Heart right ventricle (tissue), 16 donors: ENCODE measurements at regions of chr9 and their contacts with region 1.

Region 1: DNA sequence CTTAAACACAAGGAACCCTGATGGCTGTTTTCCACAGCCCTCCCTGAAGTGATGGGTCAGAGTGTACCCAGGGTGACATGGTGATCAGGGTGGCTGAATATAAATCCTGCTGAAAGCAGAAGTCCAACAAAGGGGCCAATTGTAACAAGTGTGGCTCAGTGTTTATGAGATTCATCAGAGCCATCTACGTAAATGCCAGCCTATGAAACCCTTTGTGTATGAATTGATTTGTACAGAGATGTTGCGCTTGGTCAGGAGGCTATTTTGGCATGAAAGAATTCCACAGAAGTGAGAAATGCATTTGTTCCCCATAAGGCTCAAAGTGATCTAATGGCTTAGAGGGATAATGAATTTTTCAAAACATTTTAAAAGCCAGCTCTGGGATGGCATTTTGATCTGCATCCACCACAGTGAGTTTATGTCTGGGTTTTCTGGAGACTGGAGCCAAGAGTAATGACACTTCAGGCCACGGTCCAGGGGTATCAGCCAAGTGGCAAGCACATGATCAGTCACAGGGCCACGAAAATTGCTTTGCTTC is 12.4 kb downstream of the PRUNE2 start:
- DNase-seq: no peak
- ATAC-seq: peak in 1 of 8 donors; percentile 41
- H3K4me3 ChIP-seq: no peak overlapping the region
- H3K27ac ChIP-seq: no peak overlapping the region
- H3K4me1 ChIP-seq: no peaks in the 10 kb centered on the region
- H3K27me3 ChIP-seq: peaks cover 0 to 13% (median 8%) of the 10 kb centered on the region in 7 donors
- CTCF ChIP-seq: no peak

Region 2: GRCh38 chr9:76374702-76375559 is 518.5 kb before region 1 on chr9:
- intact Hi-C with region 1: no loop called
- DNase-seq: peak; percentile 66 to 78
- ATAC-seq: peak; percentile 88 to 96 (median 90)
- H3K4me3 ChIP-seq: no peak overlapping the region
- H3K27ac ChIP-seq: peak overlapping the region in 9 of 10 donors; percentile 20 to 71 (median 53)
- H3K4me1 ChIP-seq: peaks cover 3 to 51% (median 33%) of the 10 kb centered on the region in 9 donors
- H3K27me3 ChIP-seq: no peaks in the 10 kb centered on the region
- CTCF ChIP-seq: no peak

Region 3: GRCh38 chr9:76846297-76846696 is 47.2 kb before region 1 on chr9:
- intact Hi-C with region 1: loop called in 1 of 10 experiments (anchors 10 kb)
- DNase-seq: no peak
- ATAC-seq: no peak
- H3K4me3 ChIP-seq: no peak overlapping the region
- H3K27ac ChIP-seq: no peak overlapping the region
- H3K4me1 ChIP-seq: no peaks in the 10 kb centered on the region
- H3K27me3 ChIP-seq: no peaks in the 10 kb centered on the region
- CTCF ChIP-seq: no peak

Region 4: DNA sequence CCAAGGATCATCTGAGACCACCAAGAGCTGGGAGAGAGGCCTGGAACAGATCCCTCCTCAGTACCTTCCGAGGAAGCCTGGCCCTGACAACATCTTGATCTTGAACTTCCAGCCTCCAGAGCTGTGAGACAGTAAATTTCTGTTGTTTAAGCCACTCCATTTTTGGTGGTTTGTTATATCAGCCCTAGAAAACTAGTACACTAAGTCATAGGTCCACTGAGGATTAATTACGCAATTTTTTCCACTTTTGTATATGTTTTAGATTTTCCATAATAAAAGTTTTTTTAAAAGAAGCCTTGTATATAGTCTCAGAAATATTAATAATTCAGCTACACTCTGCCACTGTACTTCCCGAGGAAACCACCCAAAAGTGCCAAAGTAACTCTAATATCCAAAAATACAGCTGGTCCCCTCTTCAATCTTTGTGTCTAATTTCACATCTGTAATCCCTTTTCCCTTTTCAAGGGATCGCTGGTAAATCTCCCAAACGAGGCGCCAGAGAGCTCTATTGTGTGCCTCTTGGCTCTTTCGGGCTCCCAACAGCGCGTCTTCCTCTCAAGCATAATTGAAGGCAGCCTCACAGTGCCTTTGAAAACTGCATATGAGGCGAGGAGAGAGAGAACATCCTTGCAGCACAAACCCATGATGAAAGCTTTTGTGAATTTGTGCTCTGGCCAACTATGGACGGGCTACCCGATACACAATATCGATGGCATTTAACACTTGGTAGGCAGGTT is 20.2 kb before region 1 on chr9:
- intact Hi-C with region 1: no loop called
- DNase-seq: peak in 1 of 2 donors; percentile 6
- ATAC-seq: peak in 1 of 8 donors; percentile 20
- H3K4me3 ChIP-seq: no peak overlapping the region
- H3K27ac ChIP-seq: peak overlapping the region in 2 of 10 donors; percentile 22 to 40
- H3K4me1 ChIP-seq: peaks cover 0 to 6% (median 0%) of the 10 kb centered on the region in 9 donors
- H3K27me3 ChIP-seq: peaks cover 0 to 40% (median 6%) of the 10 kb centered on the region in 7 donors
- CTCF ChIP-seq: no peak

Region 5: DNA sequence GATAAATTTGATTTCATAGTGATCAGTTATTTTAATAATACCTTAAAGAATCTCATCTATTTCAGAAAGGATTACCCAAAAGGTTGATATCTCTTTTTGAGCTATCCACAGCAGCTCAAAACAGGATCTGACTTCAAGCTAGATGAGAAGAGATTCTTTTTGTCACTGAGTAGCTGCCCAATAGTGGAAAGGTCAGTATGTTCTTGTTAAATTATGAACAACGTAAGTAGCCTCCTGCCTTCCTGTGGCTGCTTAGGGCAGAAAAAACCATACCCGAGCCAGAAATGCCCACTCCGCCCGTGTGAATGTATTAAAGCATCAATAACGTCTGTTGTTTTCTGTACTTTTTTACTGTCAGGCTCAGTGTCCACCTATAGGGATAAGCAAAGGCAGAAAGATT is 63.8 kb after region 1 on chr9:
- intact Hi-C with region 1: no loop called
- DNase-seq: no peak
- ATAC-seq: no peak
- H3K4me3 ChIP-seq: no peak overlapping the region
- H3K27ac ChIP-seq: no peak overlapping the region
- H3K4me1 ChIP-seq: no peaks in the 10 kb centered on the region
- H3K27me3 ChIP-seq: peaks cover 0 to 8% (median 5%) of the 10 kb centered on the region in 7 donors
- CTCF ChIP-seq: no peak

Region 6: GRCh38 chr9:77014597-77015263 is 121.3 kb after region 1 on chr9:
- intact Hi-C with region 1: no loop called
- DNase-seq: no peak
- ATAC-seq: no peak
- H3K4me3 ChIP-seq: no peak overlapping the region
- H3K27ac ChIP-seq: no peak overlapping the region
- H3K4me1 ChIP-seq: peaks cover 0 to 54% (median 33%) of the 10 kb centered on the region in 9 donors
- H3K27me3 ChIP-seq: peaks cover 70 to 100% (median 100%) of the 10 kb centered on the region in 7 donors
- CTCF ChIP-seq: no peak